HEK293 (cell line): ENCODE measurements at regions of chr11 and their contacts with region 1.

Region 1: GRCh38 chr11:107689317-107690202 is 22.3 kb downstream of the SLN start:
- H3K4me3 ChIP-seq: no peak overlapping the region
- H3K27ac ChIP-seq: no peak overlapping the region
- H3K4me1 ChIP-seq: no peaks in the 10 kb centered on the region
- CTCF ChIP-seq: 0 out of 2 replicates have a peak, but pooled peaks have one; percentile 9

Region 2: DNA sequence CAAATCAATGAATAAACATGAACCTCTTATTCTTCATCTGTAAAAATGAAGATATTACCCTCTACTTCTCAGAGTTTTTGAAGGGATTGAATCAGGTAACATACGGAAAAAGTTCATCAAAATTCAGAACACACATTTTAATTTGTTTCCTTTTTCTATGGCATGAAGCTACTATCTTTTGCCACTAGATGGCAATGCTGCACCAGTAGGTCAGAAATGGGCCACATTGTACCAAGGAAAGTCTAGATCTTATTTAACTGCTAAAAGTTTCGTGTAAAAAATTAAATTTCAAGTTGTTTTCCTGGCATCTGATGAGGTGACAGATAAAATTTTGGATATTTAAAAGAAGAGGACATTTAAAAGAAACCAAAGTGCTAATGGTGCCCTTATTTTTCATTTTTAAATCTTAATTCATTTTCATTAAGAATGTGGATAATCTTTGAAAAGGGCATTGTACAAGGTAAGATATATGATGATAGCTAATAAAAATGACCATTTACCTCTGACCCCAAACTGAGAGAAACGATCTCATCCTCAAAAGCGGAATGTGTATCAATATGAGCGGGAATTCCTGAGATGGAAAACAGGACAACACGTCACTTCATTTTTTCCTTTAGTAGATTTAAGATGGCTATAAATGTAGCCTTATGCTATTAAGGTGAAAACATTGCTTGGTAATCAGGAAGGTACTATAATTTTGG is 140.2 kb before region 1 on chr11:
- CTCF ChIA-PET with region 1: interaction called, 75 read pairs
- POLR2A ChIA-PET with region 1: no interaction called
- H3K4me3 ChIP-seq: no peak overlapping the region
- H3K27ac ChIP-seq: no peak overlapping the region
- H3K4me1 ChIP-seq: no peaks in the 10 kb centered on the region
- CTCF ChIP-seq: no peak

Region 3: DNA sequence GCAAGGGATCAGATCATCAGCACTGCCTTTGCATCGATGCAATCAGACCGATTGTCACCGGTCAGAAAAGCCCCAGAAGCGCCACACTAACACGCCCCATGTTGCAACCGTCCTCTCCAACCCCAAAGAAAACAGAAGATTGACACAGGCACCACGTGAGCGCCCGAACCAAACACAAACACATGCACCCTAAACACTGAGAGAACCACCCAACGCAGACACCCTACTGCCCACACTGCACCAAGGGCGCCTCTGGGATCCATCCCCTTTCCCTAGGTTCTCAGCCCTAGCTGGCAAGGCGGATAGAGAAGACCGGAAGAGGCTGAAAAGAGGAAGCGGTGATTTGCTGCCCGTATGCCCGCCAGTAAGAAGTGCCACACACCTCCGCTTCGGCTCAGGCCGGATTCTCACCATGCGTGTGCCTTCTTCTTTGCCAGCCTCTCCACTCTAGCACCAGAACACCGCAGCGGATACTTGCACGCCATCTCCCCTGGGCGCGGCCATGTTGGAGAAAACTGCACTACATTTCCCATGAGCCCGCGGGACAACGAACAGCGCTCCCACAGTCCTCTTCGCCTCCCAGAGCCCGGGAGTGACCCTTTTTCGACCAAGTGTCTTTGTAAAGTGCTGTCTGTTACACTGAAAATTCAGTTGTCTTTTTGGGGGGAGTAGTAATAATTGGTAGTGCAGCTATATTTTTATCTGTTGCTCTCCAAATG is 124.2 kb before region 1 on chr11 and contains the start of gene ALKBH8:
- CTCF ChIA-PET with region 1: interaction called, 98 read pairs
- POLR2A ChIA-PET with region 1: no interaction called
- H3K4me3 ChIP-seq: peak within 1 kb of the TSS; percentile 94
- H3K27ac ChIP-seq: peak within 1 kb of the TSS; percentile 30; the same call in 1 of the 2 replicates
- H3K4me1 ChIP-seq: no peaks in the 10 kb centered on the region
- CTCF ChIP-seq: no peak

Region 4: DNA sequence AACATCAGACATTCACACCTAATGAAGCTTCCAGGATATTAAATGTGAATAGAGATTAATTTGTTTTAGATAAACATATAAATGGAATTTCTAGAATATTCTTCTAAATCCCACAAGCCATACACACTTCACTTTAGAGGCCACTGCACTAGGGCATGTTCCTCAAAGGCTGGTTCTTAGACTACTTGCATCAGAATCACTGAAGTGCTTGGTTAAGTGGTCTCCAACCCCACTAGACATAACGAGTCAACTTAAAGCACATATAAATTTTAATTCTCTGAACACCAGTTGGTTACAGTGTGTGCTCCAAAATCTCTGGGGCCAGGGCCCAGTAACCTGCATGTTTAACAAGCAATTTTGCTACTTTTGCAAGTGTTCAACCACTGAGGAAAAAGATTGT is 116.1 kb before region 1 on chr11:
- CTCF ChIA-PET with region 1: interaction called, 53 read pairs
- POLR2A ChIA-PET with region 1: no interaction called
- H3K4me3 ChIP-seq: no peak overlapping the region
- H3K27ac ChIP-seq: no peak overlapping the region
- H3K4me1 ChIP-seq: no peaks in the 10 kb centered on the region
- CTCF ChIP-seq: no peak

Region 5: DNA sequence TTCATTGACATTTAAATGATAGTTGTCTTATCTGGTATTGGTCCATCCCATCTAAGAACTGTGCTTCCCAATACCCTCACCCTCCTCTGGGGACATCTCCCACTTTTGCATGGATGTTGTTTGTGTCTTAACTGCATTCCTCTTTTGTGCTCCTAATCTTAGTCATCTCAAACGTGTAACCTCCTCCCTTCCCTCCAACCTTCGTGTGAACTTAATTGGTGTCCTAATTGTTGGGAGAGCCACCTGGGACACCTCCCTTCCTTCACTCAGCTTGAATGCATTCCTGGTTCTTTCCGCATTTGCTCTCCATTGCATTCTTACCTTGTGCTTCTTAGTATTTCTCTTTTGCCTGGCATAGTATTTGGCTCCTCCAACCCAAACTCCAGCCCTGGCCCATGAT is 108.4 kb before region 1 on chr11:
- CTCF ChIA-PET with region 1: interaction called, 53 read pairs
- POLR2A ChIA-PET with region 1: no interaction called
- H3K4me3 ChIP-seq: no peak overlapping the region
- H3K27ac ChIP-seq: no peak overlapping the region
- H3K4me1 ChIP-seq: no peaks in the 10 kb centered on the region
- CTCF ChIP-seq: no peak

Region 6: GRCh38 chr11:107598225-107599139 is 91.1 kb before region 1 on chr11:
- CTCF ChIA-PET with region 1: interaction called, 10 read pairs
- POLR2A ChIA-PET with region 1: no interaction called
- H3K4me3 ChIP-seq: no peak overlapping the region
- H3K27ac ChIP-seq: no peak overlapping the region
- H3K4me1 ChIP-seq: no peaks in the 10 kb centered on the region
- CTCF ChIP-seq: no peak; the same call in 1 of the 2 replicates